T-cell (primary cell): ENCODE measurements at regions of chr7 and their contacts with region 1.

Region 1: GRCh38 chr7:65872776-65873581 is at the start of gene VKORC1L1:
- DNase-seq: peak; percentile 82 to 96 (median 90)
- ATAC-seq: peak; percentile 91 to 94 (median 94)
- H3K4me3 ChIP-seq: peak within 1 kb of the TSS; percentile 47 to 73
- H3K4me3 Mint-ChIP-seq: peak within 1 kb of the TSS; percentile 75 to 86 (median 78)
- H3K27ac ChIP-seq: no peak within 1 kb of the TSS
- H3K27ac Mint-ChIP-seq: peak within 1 kb of the TSS; percentile 39 to 69
- H3K4me1 ChIP-seq: peaks cover 0 to 13% of the 10 kb centered on the region in 2 experiments
- H3K4me1 Mint-ChIP-seq: peaks cover 0 to 9% (median 6%) of the 10 kb centered on the region in 3 donors
- H3K27me3 ChIP-seq: peaks cover 0 to 3% of the 10 kb centered on the region in 2 experiments
- H3K27me3 Mint-ChIP-seq: no peaks in the 10 kb centered on the region
- total RNA-seq, gene VKORC1L1: 3.8 to 13.2 (median 10.8) TPM

Region 2: DNA sequence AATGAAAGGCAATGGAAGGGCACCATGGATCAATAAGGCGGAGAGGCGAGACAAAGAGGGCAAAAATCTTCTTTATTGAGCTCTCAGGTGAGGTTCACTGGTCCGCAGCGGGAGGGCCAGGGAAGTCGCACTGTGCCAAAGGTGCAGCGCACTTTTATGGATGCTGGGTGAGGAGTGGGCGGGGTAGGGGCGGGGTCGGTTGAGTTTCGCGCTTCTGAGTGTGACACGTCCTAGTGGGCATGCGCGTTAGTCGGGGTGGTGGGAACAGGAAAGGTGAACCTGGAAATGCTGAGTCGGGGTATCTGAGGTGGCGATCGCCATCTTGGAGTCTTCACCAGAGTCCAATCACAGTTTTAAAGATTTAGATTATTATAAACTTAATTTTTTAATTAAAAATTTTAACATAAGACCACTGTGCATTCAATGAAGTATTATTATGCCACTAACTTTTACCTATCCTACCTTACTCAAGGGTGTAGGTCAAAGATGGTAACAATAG is 1033.1 kb before region 1 on chr7:
- CTCF ChIA-PET with region 1: no interaction called
- POLR2A ChIA-PET with region 1: no interaction called
- DNase-seq: peak in 3 of 35 experiments; percentile 3 to 16 (median 9)
- ATAC-seq: no peak
- H3K4me3 ChIP-seq: no peak overlapping the region
- H3K4me3 Mint-ChIP-seq: peak overlapping the region in 1 of 3 donors; percentile 71
- H3K27ac ChIP-seq: no peak overlapping the region
- H3K27ac Mint-ChIP-seq: no peak overlapping the region
- H3K4me1 ChIP-seq: no peaks in the 10 kb centered on the region
- H3K4me1 Mint-ChIP-seq: peaks cover 0 to 5% (median 0%) of the 10 kb centered on the region in 3 donors
- H3K27me3 ChIP-seq: no peaks in the 10 kb centered on the region
- H3K27me3 Mint-ChIP-seq: no peaks in the 10 kb centered on the region

Region 3: GRCh38 chr7:66265566-66265965 is 392.6 kb after region 1 on chr7:
- CTCF ChIA-PET with region 1: no interaction called
- POLR2A ChIA-PET with region 1: interaction called in 1 of 2 experiments, 11 read pairs
- DNase-seq: peak in 1 of 35 experiments; percentile 1
- ATAC-seq: no peak
- H3K4me3 ChIP-seq: no peak overlapping the region
- H3K4me3 Mint-ChIP-seq: no peak overlapping the region
- H3K27ac ChIP-seq: no peak overlapping the region
- H3K27ac Mint-ChIP-seq: no peak overlapping the region
- H3K4me1 ChIP-seq: no peaks in the 10 kb centered on the region
- H3K4me1 Mint-ChIP-seq: no peaks in the 10 kb centered on the region
- H3K27me3 ChIP-seq: no peaks in the 10 kb centered on the region
- H3K27me3 Mint-ChIP-seq: peaks cover 4 to 6% of the 10 kb centered on the region in 2 donors